ENCODE measurements at regions of chr1 and their contacts with region 1.

Region 1: DNA sequence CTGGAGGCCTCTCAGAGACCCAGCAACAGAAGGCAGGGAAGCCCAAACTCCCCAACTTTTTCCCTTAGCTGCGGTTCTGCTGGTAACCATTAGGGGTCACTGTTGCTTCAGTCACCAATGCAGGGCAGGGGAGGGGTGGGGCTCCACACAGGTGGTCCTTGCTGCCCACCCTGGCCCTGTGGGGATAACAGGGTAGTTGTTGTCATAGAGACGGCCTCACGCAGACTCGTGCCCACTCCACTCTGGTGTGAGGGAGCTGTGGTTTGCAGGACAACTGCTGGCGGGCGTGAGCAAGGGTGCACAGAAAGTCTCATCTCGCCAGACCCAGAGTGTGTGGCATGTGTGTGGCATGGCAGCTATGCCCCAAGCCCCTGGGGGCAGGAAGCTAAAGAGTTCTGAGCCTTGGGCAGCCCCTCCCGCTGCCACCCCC is 19.9 kb downstream of the INSRR start:
- DNase-seq: peak; percentile 59
- H3K4me3 Mint-ChIP-seq: no peak overlapping the region
- H3K27ac Mint-ChIP-seq: no peak overlapping the region
- H3K4me1 Mint-ChIP-seq: peaks cover 42% of the 10 kb centered on the region
- H3K27me3 Mint-ChIP-seq: peaks cover 51% of the 10 kb centered on the region

Region 2: DNA sequence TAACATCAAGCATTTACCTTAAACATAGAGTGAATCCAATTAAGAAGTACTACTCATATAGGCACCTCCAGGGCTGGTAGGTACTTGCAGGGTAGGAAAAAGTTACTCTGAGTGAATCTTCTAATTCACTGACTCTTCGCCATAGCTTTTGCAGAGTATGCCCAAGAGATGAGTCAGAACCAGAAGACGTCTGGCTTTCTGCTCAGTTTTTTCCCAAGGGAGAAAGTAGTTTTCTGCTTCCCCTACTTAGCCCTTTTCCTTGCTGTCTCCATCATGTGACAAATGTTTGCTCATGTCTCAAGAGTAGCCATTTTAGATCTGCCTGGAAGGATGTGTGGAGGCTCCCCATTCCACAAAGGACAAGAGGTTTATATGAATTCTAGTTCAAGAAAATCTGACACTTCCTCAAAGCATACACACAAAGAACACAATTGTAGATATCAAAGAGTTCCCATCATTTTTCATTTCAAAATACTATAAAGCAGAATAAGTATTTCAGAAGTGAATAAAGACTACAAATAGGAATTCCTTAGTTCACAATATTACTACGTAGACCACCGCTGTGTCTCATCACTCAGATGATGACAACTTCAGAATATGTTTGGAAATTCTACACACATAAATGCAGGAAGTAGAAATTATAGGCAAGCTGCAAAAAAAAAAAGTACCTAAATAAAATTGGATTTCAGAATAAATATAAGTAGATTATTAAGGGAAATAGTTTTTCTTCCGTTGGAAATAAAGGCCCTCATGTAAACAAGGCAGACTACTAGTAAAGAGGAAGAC is 1374.9 kb before region 1 on chr1:
- CTCF ChIA-PET with region 1: no interaction called
- POLR2A ChIA-PET with region 1: no interaction called
- intact Hi-C with region 1: no loop called
- DNase-seq: no peak
- H3K4me3 Mint-ChIP-seq: no peak overlapping the region
- H3K27ac Mint-ChIP-seq: no peak overlapping the region
- H3K4me1 Mint-ChIP-seq: peaks cover 42% of the 10 kb centered on the region
- H3K27me3 Mint-ChIP-seq: no peaks in the 10 kb centered on the region

Region 3: DNA sequence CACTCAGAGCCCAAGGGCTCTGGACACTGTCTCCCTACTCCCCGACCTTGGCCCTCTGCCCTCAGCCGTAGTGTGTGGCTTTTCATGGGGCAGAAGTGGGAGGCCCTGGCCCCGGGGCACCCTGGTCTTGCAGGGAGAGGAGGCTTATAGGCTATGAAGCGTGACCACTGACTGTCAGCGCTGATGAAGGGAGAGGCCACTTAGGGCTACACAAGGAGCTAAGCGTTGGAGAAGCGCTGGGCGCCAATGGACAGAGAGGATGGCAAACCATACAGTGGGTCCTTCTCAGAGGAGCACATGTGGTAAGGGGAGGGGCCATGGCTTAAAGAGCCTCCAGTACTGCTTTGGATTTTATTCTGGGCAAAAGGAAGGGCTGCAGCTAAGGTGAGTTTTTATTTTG is 141.5 kb before region 1 on chr1:
- CTCF ChIA-PET with region 1: no interaction called
- POLR2A ChIA-PET with region 1: no interaction called
- intact Hi-C with region 1: no loop called
- DNase-seq: no peak
- H3K4me3 Mint-ChIP-seq: no peak overlapping the region
- H3K27ac Mint-ChIP-seq: no peak overlapping the region
- H3K4me1 Mint-ChIP-seq: peaks cover 3% of the 10 kb centered on the region
- H3K27me3 Mint-ChIP-seq: peaks cover 39% of the 10 kb centered on the region

Region 4: GRCh38 chr1:156804572-156805243 is 34.3 kb before region 1 on chr1:
- CTCF ChIA-PET with region 1: interaction called, 49 read pairs
- POLR2A ChIA-PET with region 1: interaction called, 3 read pairs
- intact Hi-C with region 1: no loop called
- DNase-seq: no peak
- H3K4me3 Mint-ChIP-seq: no peak overlapping the region
- H3K27ac Mint-ChIP-seq: peak overlapping the region; percentile 68
- H3K4me1 Mint-ChIP-seq: peaks cover 59% of the 10 kb centered on the region
- H3K27me3 Mint-ChIP-seq: no peaks in the 10 kb centered on the region

Region 5: GRCh38 chr1:156821801-156822200 is 17.2 kb before region 1 on chr1:
- CTCF ChIA-PET with region 1: interaction called, 38 read pairs
- POLR2A ChIA-PET with region 1: interaction called, 4 read pairs
- intact Hi-C with region 1: no loop called
- DNase-seq: peak; percentile 79
- H3K4me3 Mint-ChIP-seq: no peak overlapping the region
- H3K27ac Mint-ChIP-seq: peak overlapping the region; percentile 75
- H3K4me1 Mint-ChIP-seq: peaks cover 41% of the 10 kb centered on the region
- H3K27me3 Mint-ChIP-seq: no peaks in the 10 kb centered on the region

Region 6: DNA sequence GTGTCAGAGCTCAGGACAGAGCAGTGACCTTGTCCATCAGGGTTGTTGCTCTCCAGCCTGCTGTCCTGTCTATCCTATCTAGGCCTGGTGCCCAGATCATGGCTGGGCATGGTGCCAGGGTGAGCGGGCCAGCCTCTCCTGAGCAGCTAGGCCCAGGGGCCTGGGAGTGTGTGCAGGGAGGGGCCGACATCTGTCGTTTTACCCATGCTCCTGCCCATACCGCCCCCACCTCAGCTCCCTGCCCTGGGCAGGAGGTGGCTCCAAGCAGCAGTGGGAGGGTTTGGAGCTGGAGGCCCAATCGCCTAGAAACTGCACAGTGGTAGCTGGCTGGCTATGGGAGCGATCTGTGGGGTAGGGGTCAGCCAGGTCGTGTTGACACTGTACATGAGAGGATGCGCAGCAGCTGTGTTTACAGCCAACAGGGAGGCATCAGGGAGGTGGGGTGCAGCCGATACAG is 13.4 kb after region 1 on chr1:
- CTCF ChIA-PET with region 1: interaction called, 47 read pairs
- POLR2A ChIA-PET with region 1: interaction called, 9 read pairs
- intact Hi-C with region 1: no loop called
- DNase-seq: no peak
- H3K4me3 Mint-ChIP-seq: no peak overlapping the region
- H3K27ac Mint-ChIP-seq: no peak overlapping the region
- H3K4me1 Mint-ChIP-seq: peaks cover 9% of the 10 kb centered on the region
- H3K27me3 Mint-ChIP-seq: peaks cover 11% of the 10 kb centered on the region

Region 7: GRCh38 chr1:156927215-156928042 is 88.4 kb after region 1 on chr1:
- CTCF ChIA-PET with region 1: interaction called, 15 read pairs
- POLR2A ChIA-PET with region 1: no interaction called
- intact Hi-C with region 1: no loop called
- DNase-seq: peak; percentile 79
- H3K4me3 Mint-ChIP-seq: no peak overlapping the region
- H3K27ac Mint-ChIP-seq: no peak overlapping the region
- H3K4me1 Mint-ChIP-seq: peaks cover 16% of the 10 kb centered on the region
- H3K27me3 Mint-ChIP-seq: peaks cover 75% of the 10 kb centered on the region

Measured in activated CD4-positive, alpha-beta memory T cell treated with anti-CD3 and anti-CD28 coated beads for 36 hours (primary cell).